ENCODE measurements at regions of chr2 and their contacts with region 1.

Region 1: GRCh38 chr2:127313406-127313805 is 19.5 kb upstream of the ERCC3 start:
- DNase-seq: no peak
- ATAC-seq: peak in 2 of 4 donors; percentile 34 to 42
- H3K4me3 ChIP-seq: no peak overlapping the region
- H3K27ac ChIP-seq: no peak overlapping the region
- H3K4me1 ChIP-seq: no peaks in the 10 kb centered on the region
- H3K27me3 ChIP-seq: no peaks in the 10 kb centered on the region
- CTCF ChIP-seq: no peak
- POLR2A ChIP-seq: no peak

Region 2: GRCh38 chr2:127486247-127487058 is 173.0 kb after region 1 on chr2:
- intact Hi-C with region 1: loop called in 1 of 2 experiments (anchors 10 kb)
- DNase-seq: no peak
- ATAC-seq: peak in 2 of 4 donors; percentile 23 to 37
- H3K4me3 ChIP-seq: no peak overlapping the region
- H3K27ac ChIP-seq: no peak overlapping the region
- H3K4me1 ChIP-seq: no peaks in the 10 kb centered on the region
- H3K27me3 ChIP-seq: no peaks in the 10 kb centered on the region
- CTCF ChIP-seq: no peak
- POLR2A ChIP-seq: no peak

Measured in right lobe of liver (tissue), 6 donors.